SK-N-SH (cell line): ENCODE measurements at regions of chr12 and their contacts with region 1.

Region 1: DNA sequence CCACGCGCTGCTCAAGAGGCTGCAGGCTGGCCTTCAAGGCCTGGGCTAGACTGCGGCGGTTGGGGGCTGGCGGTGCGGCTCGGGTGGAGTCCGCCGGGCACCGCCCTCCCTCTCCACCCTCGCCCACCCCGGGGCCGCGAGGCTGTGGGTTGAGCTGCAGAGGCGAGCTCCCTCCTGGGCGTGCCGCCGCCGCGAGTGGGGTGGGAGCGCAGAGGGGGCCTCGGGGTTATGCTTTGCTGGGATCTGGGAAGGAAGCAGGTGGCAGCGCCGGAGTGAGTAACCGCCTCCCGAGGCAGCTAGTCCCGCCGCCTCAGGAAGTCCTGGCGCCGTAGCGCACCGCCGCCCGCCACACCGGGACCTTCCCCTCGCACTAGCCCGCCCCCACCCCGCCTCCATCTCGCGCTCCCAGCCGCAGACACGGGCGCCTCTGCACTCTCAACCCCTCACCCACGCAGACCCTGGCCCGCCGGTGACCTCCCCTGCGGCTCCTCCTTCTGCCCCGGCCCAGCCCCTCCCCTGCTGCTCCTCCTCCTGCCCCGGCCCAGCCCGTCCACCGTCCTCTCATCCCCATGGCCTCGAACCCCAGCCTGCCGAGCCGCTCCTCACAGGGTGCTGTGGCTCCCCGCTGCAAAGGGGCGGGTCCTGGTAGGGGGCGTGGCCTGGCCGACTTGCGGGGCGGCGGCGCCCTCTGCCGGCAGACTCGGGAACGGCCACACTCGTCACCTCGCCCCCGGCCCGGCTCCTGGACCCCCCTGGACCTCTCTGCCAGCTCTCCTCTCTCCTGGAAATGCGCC is 16.6 kb downstream of the TAMALIN start:
- DNase-seq: peak; percentile 96
- H3K4me3 ChIP-seq: peak overlapping the region; percentile 49 to 66
- H3K27ac ChIP-seq: peak overlapping the region in 1 of 2 experiments; percentile 12; a peak in 1 of 4 replicates
- H3K4me1 ChIP-seq: peaks cover 5 to 23% of the 10 kb centered on the region in 2 experiments; a peak in 1 of 4 replicates
- H3K27me3 ChIP-seq: no peaks in the 10 kb centered on the region
- CTCF ChIP-seq: peak; percentile 90
- EP300 ChIP-seq: no peak; a peak in 1 of 4 replicates
- RAD21 ChIP-seq: peak; percentile 80

Region 2: GRCh38 chr12:51886021-51886322 is 137.4 kb before region 1 on chr12:
- CTCF ChIA-PET with region 1: interaction called, 111 read pairs
- POLR2A ChIA-PET with region 1: no interaction called
- DNase-seq: no peak
- H3K4me3 ChIP-seq: no peak overlapping the region
- H3K27ac ChIP-seq: peak overlapping the region in 1 of 2 experiments; percentile 58; a peak in 2 of 4 replicates
- H3K4me1 ChIP-seq: no peaks in the 10 kb centered on the region; a peak in 1 of 4 replicates
- H3K27me3 ChIP-seq: no peaks in the 10 kb centered on the region
- CTCF ChIP-seq: no peak
- EP300 ChIP-seq: no peak
- RAD21 ChIP-seq: no peak

Region 3: DNA sequence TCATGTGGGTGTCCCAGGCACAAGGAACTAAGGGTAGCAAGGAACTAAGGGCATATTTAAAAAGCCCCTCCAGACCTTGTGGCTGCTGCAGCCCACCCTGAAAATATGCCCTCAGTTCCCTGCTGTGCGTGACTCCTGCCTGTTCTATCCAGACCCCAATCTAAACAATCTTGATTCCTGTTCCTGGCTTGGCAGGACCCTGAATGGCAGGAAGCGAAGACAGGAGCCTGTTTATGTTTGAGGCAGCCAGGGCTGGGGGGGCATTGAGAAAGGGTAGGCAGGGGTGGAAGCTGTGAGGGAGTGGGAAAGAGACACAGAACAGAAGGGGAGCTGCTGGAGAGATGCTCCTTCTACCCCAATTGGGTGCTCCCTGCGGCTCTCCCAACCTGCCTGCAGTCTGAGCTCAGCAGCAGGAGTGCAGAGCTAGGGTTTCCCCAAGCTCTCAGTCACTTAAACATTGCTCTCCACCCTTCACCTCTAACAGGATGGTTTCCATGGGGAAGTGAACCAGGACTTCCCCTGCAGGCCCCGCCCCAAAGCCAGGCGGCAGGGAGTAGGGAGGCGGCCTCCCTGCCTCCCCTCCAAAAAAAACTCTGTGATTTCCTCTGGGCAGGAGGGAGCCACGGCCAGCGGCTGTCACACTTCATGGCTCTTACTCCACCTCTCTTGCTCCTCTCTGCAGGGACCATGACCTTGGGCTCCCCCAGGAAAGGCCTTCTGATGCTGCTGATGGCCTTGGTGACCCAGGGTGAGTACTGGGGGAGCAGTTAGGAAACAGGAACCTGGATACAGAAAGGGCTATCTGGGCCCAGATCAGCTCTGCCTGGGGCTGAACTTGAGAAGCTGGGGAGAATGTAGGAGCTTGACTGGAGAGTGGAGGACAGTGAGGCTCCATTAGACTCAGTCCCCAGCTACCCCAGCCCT is 111.3 kb before region 1 on chr12:
- CTCF ChIA-PET with region 1: interaction called, 11 read pairs
- POLR2A ChIA-PET with region 1: no interaction called
- DNase-seq: peak; percentile 77
- H3K4me3 ChIP-seq: no peak overlapping the region
- H3K27ac ChIP-seq: peak overlapping the region in 1 of 2 experiments; percentile 84; a peak in 2 of 4 replicates
- H3K4me1 ChIP-seq: peaks cover 0 to 64% of the 10 kb centered on the region in 2 experiments; a peak in 2 of 4 replicates
- H3K27me3 ChIP-seq: no peaks in the 10 kb centered on the region
- CTCF ChIP-seq: no peak
- EP300 ChIP-seq: peak in 1 of 2 experiments; percentile 16; a peak in 1 of 4 replicates
- RAD21 ChIP-seq: no peak

Region 4: DNA sequence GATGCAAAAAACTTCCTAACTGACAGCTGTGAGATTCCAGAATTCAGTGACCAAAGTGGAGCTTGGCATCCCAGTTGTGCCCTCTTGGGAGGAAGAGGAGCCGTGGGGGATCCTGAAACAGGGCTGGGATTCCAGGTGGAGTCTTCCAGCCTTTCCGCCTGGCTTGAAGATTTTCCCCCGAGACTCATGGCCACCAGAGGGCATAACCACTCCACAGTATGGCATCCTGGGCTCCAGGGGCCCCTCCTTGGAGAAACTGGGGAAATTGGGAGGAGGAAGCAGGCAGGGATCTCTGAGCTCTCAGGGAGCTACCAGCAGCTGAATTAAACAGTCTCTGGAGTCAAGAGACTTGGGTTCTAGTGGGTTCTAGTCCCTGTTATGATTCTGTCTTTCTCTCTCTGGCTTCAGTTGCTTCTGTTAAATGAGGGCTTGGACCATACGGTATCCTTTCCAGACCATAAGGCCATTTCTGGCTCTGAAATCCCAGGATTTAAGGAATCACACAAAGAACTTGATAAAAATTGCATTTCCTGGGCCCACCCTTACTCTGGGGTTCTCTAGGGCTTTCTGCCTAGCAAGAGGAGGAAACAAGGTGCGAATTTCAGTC is 19.2 kb before region 1 on chr12:
- CTCF ChIA-PET with region 1: interaction called, 608 read pairs
- POLR2A ChIA-PET with region 1: interaction called, 12 read pairs
- DNase-seq: peak; percentile 67
- H3K4me3 ChIP-seq: no peak overlapping the region
- H3K27ac ChIP-seq: no peak overlapping the region
- H3K4me1 ChIP-seq: peaks cover 0 to 15% of the 10 kb centered on the region in 2 experiments; a peak in 1 of 4 replicates
- H3K27me3 ChIP-seq: no peaks in the 10 kb centered on the region
- CTCF ChIP-seq: peak; percentile 73
- EP300 ChIP-seq: no peak
- RAD21 ChIP-seq: peak; percentile 79

Region 5: DNA sequence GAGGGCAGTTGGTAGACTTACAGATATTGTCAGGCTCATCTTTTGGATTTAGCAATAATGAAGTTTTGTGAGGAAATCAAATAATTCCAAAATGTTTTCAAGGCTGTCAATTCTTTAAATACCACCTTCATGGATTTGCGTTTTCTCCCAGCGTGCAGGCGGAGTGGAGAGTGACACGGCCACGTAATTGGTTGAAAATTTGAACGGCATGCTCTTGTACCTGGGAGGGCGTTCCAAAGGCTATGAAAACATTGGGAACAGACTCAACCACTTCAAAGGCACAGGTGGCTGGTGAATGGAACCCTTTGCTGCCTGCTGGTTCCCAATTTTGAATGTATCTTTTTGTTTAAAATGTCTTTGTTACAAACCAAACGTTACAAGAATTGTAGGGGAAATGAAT is 68.5 kb after region 1 on chr12:
- CTCF ChIA-PET with region 1: interaction called, 949 read pairs
- POLR2A ChIA-PET with region 1: no interaction called
- DNase-seq: peak; percentile 5
- H3K4me3 ChIP-seq: no peak overlapping the region
- H3K27ac ChIP-seq: no peak overlapping the region
- H3K4me1 ChIP-seq: no peaks in the 10 kb centered on the region; a peak in 1 of 4 replicates
- H3K27me3 ChIP-seq: peaks cover 35% of the 10 kb centered on the region
- CTCF ChIP-seq: no peak
- EP300 ChIP-seq: no peak
- RAD21 ChIP-seq: no peak

Region 6: GRCh38 chr12:52147367-52147972 is 124.1 kb after region 1 on chr12:
- CTCF ChIA-PET with region 1: interaction called, 13 read pairs
- POLR2A ChIA-PET with region 1: no interaction called
- DNase-seq: peak; percentile 58
- H3K4me3 ChIP-seq: no peak overlapping the region
- H3K27ac ChIP-seq: peak overlapping the region in 1 of 2 experiments; percentile 91; a peak in 3 of 4 replicates
- H3K4me1 ChIP-seq: peaks cover 14 to 36% of the 10 kb centered on the region in 2 experiments; a peak in 3 of 4 replicates
- H3K27me3 ChIP-seq: no peaks in the 10 kb centered on the region
- CTCF ChIP-seq: no peak
- EP300 ChIP-seq: peak in 1 of 2 experiments; percentile 88; a peak in 1 of 4 replicates
- RAD21 ChIP-seq: no peak

Region 7: GRCh38 chr12:52395761-52396434 is 372.5 kb after region 1 on chr12:
- CTCF ChIA-PET with region 1: no interaction called
- POLR2A ChIA-PET with region 1: no interaction called
- DNase-seq: no peak
- H3K4me3 ChIP-seq: no peak overlapping the region
- H3K27ac ChIP-seq: no peak overlapping the region
- H3K4me1 ChIP-seq: peaks cover 0 to 7% of the 10 kb centered on the region in 2 experiments; a peak in 1 of 4 replicates
- H3K27me3 ChIP-seq: peaks cover 37% of the 10 kb centered on the region; the same call in 1 of the 2 replicates
- CTCF ChIP-seq: peak; percentile 39
- EP300 ChIP-seq: no peak
- RAD21 ChIP-seq: no peak